ENCODE measurements at regions of chr3 and their contacts with region 1.

Region 1: GRCh38 chr3:72818092-72818773 is 30.0 kb downstream of the SHQ1 start:
- DNase-seq: peak; percentile 4
- ATAC-seq: peak; percentile 57; the same call in 1 of the 2 replicates
- H3K4me3 ChIP-seq: no peak overlapping the region
- H3K27ac ChIP-seq: no peak overlapping the region
- H3K4me1 ChIP-seq: peaks cover 2 to 11% of the 10 kb centered on the region in 2 experiments; a peak in 3 of 4 replicates
- H3K27me3 ChIP-seq: no peaks in the 10 kb centered on the region
- CTCF ChIP-seq: peak; percentile 53 to 69 (median 67); a peak in 5 of 6 replicates
- POLR2A ChIP-seq: no peak
- RAD21 ChIP-seq: peak; percentile 83

Region 2: DNA sequence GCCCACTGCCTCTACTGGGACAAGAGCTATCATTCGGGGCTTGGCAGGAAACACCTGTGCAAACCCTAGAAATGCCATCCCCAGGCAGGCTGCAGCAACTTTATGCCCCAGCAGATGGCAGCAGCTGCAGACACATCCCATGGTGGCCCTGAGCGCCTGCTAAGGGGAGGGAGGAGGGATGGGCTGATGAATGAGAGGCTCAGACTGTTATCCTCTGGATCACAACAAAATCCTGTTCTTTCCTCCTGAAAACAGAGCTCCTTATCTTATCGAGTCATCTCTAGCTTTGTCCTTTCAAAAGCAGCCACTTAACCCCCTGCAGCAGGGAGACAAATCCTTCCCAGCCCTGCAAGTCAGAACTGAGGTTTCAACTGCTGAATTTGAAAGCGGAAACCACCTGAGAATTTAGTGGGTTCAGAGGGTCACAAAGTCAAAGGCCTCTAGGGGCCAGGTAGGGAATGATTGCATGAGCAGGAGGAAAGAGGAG is 942.7 kb before region 1 on chr3:
- CTCF ChIA-PET with region 1: interaction called, 7 read pairs
- POLR2A ChIA-PET with region 1: no interaction called
- RAD21 ChIA-PET with region 1: no interaction called
- intact Hi-C with region 1: loop called (anchors 1 kb)
- DNase-seq: peak; percentile 42
- ATAC-seq: peak; percentile 100
- H3K4me3 ChIP-seq: no peak overlapping the region
- H3K27ac ChIP-seq: no peak overlapping the region
- H3K4me1 ChIP-seq: no peaks in the 10 kb centered on the region
- H3K27me3 ChIP-seq: 0 out of 2 replicates have a peak, but pooled peaks cover 9% of the 10 kb centered on the region
- CTCF ChIP-seq: peak; percentile 62 to 91 (median 86)
- POLR2A ChIP-seq: no peak
- RAD21 ChIP-seq: peak; percentile 79

Region 3: GRCh38 chr3:71955240-71956068 is 862.8 kb before region 1 on chr3:
- CTCF ChIA-PET with region 1: interaction called, 4 read pairs
- POLR2A ChIA-PET with region 1: no interaction called
- RAD21 ChIA-PET with region 1: no interaction called
- intact Hi-C with region 1: loop called (anchors 1 kb)
- DNase-seq: peak; percentile 45
- ATAC-seq: peak; percentile 86
- H3K4me3 ChIP-seq: no peak overlapping the region
- H3K27ac ChIP-seq: no peak overlapping the region
- H3K4me1 ChIP-seq: peaks cover 0 to 3% of the 10 kb centered on the region in 2 experiments; a peak in 1 of 4 replicates
- H3K27me3 ChIP-seq: peaks cover 17% of the 10 kb centered on the region; the same call in 1 of the 2 replicates
- CTCF ChIP-seq: peak; percentile 68 to 78 (median 72); a peak in 5 of 6 replicates
- POLR2A ChIP-seq: no peak
- RAD21 ChIP-seq: peak; percentile 89

Region 4: GRCh38 chr3:72447059-72447946 is 370.9 kb before region 1 on chr3:
- CTCF ChIA-PET with region 1: no interaction called
- POLR2A ChIA-PET with region 1: no interaction called
- RAD21 ChIA-PET with region 1: no interaction called
- intact Hi-C with region 1: loop called (anchors 10 kb)
- DNase-seq: peak; percentile 59
- ATAC-seq: peak; percentile 91
- H3K4me3 ChIP-seq: peak overlapping the region; percentile 65 to 76
- H3K27ac ChIP-seq: peak overlapping the region; percentile 75
- H3K4me1 ChIP-seq: peaks cover 12 to 33% of the 10 kb centered on the region in 2 experiments
- H3K27me3 ChIP-seq: no peaks in the 10 kb centered on the region
- CTCF ChIP-seq: no peak
- POLR2A ChIP-seq: no peak
- RAD21 ChIP-seq: no peak

Measured in HCT116 (cell line).